AG04449 (cell line): ENCODE measurements at regions of chr1 and their contacts with region 1.

Region 1: DNA sequence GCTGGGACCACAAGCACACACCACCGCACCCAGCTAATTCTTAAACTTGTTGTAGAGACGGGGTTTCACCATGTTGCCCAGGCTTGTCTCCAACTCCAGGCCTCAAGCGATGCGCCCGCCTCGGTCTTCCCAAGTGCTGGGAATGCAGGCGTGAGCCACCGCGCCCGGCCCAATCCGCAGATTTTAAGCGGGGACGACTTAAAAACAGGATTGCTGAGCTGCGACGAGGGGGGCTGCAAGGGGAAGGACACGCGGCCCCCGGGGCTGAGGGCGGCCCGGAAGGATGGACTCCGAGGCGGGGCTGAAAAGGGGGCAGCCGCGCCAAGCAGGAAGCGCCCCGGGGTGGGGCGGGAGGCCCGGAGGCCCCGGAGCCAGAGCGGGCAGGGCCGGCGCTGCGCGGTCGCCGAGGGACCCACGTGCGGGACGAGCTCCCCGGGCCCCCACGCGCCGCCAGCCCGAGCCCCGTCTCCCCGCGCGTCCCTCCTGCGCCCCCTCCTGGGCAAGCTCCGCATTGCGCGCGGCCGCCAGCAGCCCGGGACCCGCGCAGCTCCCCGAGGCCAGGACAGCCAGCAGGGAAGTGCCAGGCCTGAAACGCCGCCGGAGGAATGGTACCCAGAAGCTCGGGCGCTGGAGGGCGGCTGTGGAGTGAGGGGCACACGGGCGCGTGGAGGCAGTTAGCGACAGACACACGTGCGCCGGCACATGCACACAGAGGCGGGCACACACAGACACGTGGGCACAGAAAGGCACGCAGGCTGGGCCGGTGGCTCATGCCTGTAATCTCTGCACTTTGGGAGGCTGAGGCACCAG is 5.5 kb upstream of the PRKCZ start:
- DNase-seq: no peak
- H3K4me3 ChIP-seq: peak overlapping the region; percentile 36
- CTCF ChIP-seq: peak; percentile 93

Region 2: GRCh38 chr1:1815606-1816281 is 229.0 kb before region 1 on chr1:
- CTCF ChIA-PET with region 1: no interaction called
- POLR2A ChIA-PET with region 1: no interaction called
- DNase-seq: no peak
- H3K4me3 ChIP-seq: no peak overlapping the region
- CTCF ChIP-seq: no peak

Region 3: DNA sequence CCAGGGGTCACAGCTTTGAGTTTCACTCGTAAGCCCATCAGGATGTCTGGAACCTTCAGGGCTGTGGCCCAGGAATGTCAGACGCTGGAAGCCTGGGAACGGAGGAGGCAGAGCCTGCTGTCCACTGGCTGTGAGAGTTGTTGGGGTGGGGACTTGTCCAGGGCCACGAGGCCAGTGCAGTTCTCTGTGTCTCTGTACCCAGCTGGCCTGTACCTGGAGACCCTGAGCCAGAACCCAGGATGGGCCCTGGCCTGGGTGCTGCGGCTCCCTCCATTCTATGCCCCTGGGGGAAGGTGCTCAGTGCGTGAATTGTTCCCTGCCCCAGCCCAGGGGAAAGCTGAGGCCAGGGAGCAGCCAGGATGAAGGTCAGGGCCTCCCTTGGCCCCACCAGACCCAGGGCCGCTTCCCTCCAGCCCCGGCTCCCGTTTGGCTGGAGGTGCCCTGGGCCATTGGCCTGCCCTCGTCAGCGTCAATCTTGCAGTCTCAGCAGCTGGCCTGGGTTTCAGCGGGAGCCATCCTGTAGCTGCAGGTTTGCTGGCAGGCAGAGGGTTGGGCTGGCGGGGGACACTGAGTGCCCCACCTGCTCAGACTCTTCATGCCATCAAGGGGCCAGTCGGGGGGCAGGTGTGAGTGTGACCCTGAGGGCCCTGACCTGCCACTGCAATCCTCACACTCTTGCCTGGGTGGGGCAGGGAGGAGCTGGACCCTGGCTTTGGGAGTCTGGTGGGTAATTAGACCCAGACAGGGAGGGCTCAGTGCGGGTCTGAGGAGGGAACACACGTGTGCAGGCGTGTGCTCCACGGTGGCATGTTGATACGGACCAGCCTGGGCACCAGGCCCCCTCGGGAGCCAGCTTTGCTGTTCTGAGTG is 130.4 kb before region 1 on chr1:
- CTCF ChIA-PET with region 1: interaction called, 22 read pairs
- POLR2A ChIA-PET with region 1: no interaction called
- DNase-seq: no peak
- H3K4me3 ChIP-seq: no peak overlapping the region
- CTCF ChIP-seq: no peak

Region 4: GRCh38 chr1:1954831-1955441 is 89.8 kb before region 1 on chr1:
- CTCF ChIA-PET with region 1: interaction called, 32 read pairs
- POLR2A ChIA-PET with region 1: no interaction called
- DNase-seq: no peak
- H3K4me3 ChIP-seq: no peak overlapping the region
- CTCF ChIP-seq: peak; percentile 5

Region 5: DNA sequence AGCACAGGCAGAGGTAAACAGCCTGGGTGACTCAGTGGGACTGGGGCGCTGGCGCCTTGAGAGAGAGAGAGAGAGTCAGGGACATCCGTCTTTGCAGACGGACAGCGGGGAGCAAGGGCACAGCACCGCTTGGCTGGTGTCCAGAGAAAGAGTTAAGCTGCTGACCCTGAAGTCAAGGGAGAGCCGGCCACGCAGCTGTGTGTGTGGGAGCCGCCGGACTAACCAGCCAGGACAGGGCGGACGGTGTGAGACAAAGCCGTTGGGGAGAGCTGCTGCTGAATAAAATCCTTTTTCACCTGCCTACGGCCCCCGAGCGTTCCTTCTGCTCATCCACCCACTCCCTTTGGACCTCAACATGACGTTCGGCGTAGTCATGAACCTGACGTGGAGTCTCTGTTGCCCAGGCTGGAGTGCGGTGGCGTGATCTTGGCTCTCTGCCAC is 55.6 kb before region 1 on chr1:
- CTCF ChIA-PET with region 1: interaction called, 11 read pairs
- POLR2A ChIA-PET with region 1: no interaction called
- DNase-seq: no peak
- H3K4me3 ChIP-seq: no peak overlapping the region
- CTCF ChIP-seq: no peak

Region 6: GRCh38 chr1:2014181-2014580 is 30.5 kb before region 1 on chr1:
- CTCF ChIA-PET with region 1: interaction called, 11 read pairs
- POLR2A ChIA-PET with region 1: no interaction called
- DNase-seq: no peak
- H3K4me3 ChIP-seq: no peak overlapping the region
- CTCF ChIP-seq: no peak

Region 7: DNA sequence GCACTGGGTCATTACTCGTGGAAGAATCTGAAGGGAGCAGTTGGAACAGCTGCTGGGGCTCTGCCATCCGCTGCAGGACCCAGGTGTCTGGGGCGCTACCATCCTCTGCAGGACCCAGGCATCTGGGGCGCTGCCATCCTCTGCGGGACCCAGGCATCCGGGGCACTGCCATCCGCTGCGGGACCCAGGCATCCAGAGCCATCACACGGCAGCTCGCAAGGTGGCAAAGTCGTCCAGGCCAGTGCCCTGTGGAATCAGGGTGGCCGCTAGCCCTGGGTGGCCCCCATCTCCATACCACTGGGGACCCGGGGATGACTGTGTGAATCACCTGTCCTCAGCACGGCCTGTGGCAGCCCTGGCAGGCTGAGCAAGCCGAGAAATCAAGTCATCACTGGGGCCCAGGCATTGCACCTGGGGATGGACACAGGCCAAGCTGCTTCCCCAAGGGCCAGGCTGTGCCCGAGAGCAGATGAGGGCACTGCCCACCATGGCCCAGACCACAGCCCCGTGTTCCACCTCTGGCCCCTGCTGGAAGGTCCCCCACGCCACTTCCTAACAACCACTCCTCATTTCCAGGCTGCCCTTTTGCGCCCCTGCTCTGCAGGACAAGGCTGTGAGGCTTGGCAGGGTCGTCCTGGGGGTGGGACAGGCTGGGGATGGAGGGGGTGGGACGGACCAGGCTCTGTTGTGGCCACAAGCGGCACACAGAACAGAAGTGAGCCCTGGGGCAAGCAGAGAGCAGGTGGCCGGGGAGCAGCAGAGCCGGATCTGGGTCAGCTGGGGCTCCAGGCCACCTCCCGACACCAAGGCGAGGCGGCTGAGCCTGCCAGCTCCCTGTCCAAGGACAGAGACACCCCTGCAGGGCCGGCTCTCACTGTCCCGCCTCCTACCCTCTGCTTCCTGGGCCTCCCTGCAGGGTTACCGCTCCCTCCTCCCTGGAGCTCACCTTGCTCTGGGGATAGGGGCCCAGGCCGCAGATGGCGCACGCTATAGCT is 12.9 kb before region 1 on chr1:
- CTCF ChIA-PET with region 1: interaction called, 22 read pairs
- POLR2A ChIA-PET with region 1: no interaction called
- DNase-seq: no peak
- H3K4me3 ChIP-seq: no peak overlapping the region
- CTCF ChIP-seq: no peak

Region 8: GRCh38 chr1:2212542-2213491 is 168.1 kb after region 1 on chr1:
- CTCF ChIA-PET with region 1: no interaction called
- POLR2A ChIA-PET with region 1: no interaction called
- DNase-seq: peak; percentile 82
- H3K4me3 ChIP-seq: peak overlapping the region; percentile 44
- CTCF ChIP-seq: peak; percentile 35